PC-9 (cell line): ENCODE measurements at regions of chr10 and their contacts with region 1.

Region 1: GRCh38 chr10:46030091-46030937 is at the start of gene NCOA4:
- DNase-seq: peak; percentile 91 to 96
- H3K4me3 ChIP-seq: peak within 1 kb of the TSS; percentile 97
- H3K27ac ChIP-seq: peak within 1 kb of the TSS; percentile 62
- H3K4me1 ChIP-seq: peaks cover 28% of the 10 kb centered on the region
- H3K27me3 ChIP-seq: no peaks in the 10 kb centered on the region
- CTCF ChIP-seq: peak; percentile 77
- total RNA-seq, gene NCOA4: 142 and 143 TPM in 2 replicates

Region 2: DNA sequence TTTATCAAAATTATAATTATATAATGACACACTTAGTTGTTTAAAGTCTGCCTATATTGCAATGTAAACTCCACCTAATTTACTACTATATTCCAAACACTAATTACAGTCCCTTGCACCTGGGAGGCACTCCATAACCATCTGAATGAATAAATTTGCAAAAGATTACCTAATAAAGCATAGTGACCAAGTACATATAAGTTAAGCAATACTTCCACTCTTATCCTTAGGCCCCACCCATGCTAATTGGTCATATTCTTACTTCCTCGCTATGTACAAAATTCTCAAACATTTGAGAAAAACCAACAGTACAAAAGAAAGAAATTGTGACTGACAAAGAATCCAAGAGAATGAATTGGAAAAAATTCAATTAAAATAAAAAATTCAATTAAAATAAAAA is 423.0 kb before region 1 on chr10:
- CTCF ChIA-PET with region 1: no interaction called
- POLR2A ChIA-PET with region 1: no interaction called
- intact Hi-C with region 1: no loop called
- DNase-seq: no peak
- H3K4me3 ChIP-seq: no peak overlapping the region
- H3K27ac ChIP-seq: no peak overlapping the region
- H3K4me1 ChIP-seq: no peaks in the 10 kb centered on the region
- H3K27me3 ChIP-seq: no peaks in the 10 kb centered on the region
- CTCF ChIP-seq: no peak

Region 3: GRCh38 chr10:46014683-46015405 is 15.5 kb before region 1 on chr10:
- CTCF ChIA-PET with region 1: interaction called, 14 read pairs
- POLR2A ChIA-PET with region 1: no interaction called
- intact Hi-C with region 1: no loop called
- DNase-seq: no peak
- H3K4me3 ChIP-seq: no peak overlapping the region
- H3K27ac ChIP-seq: no peak overlapping the region
- H3K4me1 ChIP-seq: peaks cover 5% of the 10 kb centered on the region; the same call in 1 of the 2 replicates
- H3K27me3 ChIP-seq: no peaks in the 10 kb centered on the region
- CTCF ChIP-seq: no peak

Region 4: GRCh38 chr10:46069771-46070463 is 39.6 kb after region 1 on chr10:
- CTCF ChIA-PET with region 1: no interaction called
- POLR2A ChIA-PET with region 1: no interaction called
- intact Hi-C with region 1: no loop called
- DNase-seq: no peak
- H3K4me3 ChIP-seq: no peak overlapping the region
- H3K27ac ChIP-seq: no peak overlapping the region
- H3K4me1 ChIP-seq: no peaks in the 10 kb centered on the region
- H3K27me3 ChIP-seq: no peaks in the 10 kb centered on the region
- CTCF ChIP-seq: no peak

Region 5: GRCh38 chr10:46198516-46198915 is 168.2 kb after region 1 on chr10:
- CTCF ChIA-PET with region 1: no interaction called
- POLR2A ChIA-PET with region 1: no interaction called
- intact Hi-C with region 1: no loop called
- DNase-seq: peak in 1 of 2 experiments; percentile 52
- H3K4me3 ChIP-seq: no peak overlapping the region
- H3K27ac ChIP-seq: no peak overlapping the region
- H3K4me1 ChIP-seq: no peaks in the 10 kb centered on the region
- H3K27me3 ChIP-seq: no peaks in the 10 kb centered on the region
- CTCF ChIP-seq: no peak

Region 6: DNA sequence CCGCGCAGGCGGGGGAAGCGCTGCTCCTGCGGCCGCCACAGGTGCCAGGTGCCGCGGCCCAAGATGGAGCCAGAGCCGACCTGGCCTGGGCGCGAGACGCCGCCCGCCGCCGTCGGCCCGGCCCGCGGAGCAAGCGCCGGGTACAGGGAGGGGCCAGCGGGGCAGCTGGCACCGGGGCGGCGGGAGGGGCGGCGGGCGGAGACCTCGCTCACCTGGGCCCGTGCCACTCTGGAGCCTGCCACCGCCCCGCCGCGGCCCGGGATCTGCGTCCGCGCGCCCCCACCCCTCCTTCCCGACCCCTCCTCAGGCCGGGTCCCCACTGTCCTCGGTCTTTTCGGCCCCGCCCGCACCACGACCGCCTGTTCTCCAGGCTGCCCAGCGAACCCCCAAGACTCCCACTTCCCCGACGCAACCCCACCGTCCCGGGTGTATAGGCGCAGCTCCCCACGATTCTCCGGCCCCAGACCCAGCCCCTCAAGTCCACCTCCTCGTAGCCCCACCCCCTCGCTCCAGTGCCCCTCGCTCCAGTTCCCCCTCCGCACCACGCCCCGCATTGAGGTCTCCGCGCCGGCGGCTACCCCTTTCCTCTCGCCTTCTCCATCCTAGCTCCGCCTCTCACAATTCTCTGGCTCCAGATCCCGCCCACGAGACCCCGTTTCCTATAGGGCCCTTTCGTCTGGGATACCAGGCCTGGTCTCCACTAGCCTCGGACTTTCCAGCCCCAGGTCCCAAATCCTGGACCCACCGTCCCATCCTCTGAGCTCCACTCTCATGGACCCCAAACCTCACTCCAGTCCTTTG is 526.4 kb after region 1 on chr10 and contains the start of gene GPRIN2:
- CTCF ChIA-PET with region 1: no interaction called
- POLR2A ChIA-PET with region 1: no interaction called
- intact Hi-C with region 1: no loop called
- DNase-seq: peak; percentile 33 to 58
- H3K4me3 ChIP-seq: peak within 1 kb of the TSS; percentile 44; the same call in 1 of the 2 replicates
- H3K27ac ChIP-seq: no peak within 1 kb of the TSS
- H3K4me1 ChIP-seq: peaks cover 6% of the 10 kb centered on the region; the same call in 1 of the 2 replicates
- H3K27me3 ChIP-seq: no peaks in the 10 kb centered on the region
- CTCF ChIP-seq: no peak
- total RNA-seq, gene GPRIN2: 33.1 and 53.6 TPM in 2 replicates